RWPE1 (cell line): ENCODE measurements at regions of chr10 and their contacts with region 1.

Region 1: DNA sequence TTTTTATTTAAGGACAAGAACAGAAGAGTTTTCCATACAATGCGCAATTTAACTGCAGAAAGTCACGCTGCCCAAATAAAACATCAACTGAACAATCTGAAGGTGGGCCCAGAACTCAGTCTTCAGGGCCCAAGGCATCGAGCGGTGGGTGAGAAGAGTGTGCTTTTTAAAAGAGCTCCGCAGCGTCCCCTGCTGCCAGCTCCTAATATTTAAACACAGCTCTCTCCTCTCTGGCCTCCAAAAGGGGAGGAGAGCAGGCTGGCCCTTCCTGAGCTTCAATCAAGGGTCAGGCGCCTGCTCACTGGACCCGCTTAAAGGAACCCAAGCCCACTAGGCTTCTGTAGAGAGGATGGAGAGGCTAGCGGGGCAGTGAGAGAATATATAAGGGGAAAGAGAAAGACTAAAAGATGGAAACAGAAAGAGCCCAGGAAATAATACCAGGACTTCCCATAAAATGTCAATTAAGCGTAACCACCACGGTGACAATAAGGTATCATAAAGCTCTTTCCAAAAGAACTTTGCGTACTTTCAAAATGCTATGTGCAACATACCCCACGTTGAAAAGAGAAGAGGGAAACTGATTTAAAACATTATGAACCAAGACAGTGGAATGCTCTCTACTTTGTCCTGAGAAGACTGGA is 2.8 kb downstream of the FAM53B start:
- DNase-seq: peak; percentile 82
- H3K27ac ChIP-seq: peak overlapping the region; percentile 97
- CTCF ChIP-seq: peak; percentile 91

Region 2: GRCh38 chr10:124347956-124348355 is 393.4 kb before region 1 on chr10:
- CTCF ChIA-PET with region 1: no interaction called
- POLR2A ChIA-PET with region 1: no interaction called
- DNase-seq: no peak
- H3K27ac ChIP-seq: no peak overlapping the region
- CTCF ChIP-seq: no peak

Region 3: DNA sequence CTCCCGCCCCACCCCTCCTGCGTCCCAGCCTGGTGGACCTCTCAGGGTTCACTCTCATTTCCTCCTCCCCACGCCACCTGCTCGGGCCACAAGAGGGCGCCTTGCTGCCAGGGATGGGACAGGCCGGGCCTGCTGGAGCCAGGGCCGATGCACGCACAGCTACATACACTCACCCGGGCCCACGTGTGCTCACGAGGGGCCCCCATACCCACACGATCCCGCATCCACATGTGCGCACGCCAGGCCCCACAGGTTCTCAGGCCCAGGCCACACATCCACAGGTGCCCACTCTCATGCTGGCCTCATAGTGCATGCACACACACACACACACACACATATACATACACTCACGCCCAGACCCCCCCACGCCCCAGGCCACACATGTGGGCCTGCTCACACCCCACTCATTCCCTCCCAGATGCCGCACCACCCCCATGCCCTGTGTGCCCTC is 211.2 kb before region 1 on chr10:
- CTCF ChIA-PET with region 1: interaction called, 18 read pairs
- POLR2A ChIA-PET with region 1: no interaction called
- DNase-seq: peak; percentile 92
- H3K27ac ChIP-seq: peak overlapping the region; percentile 27
- CTCF ChIP-seq: peak; percentile 91

Region 4: DNA sequence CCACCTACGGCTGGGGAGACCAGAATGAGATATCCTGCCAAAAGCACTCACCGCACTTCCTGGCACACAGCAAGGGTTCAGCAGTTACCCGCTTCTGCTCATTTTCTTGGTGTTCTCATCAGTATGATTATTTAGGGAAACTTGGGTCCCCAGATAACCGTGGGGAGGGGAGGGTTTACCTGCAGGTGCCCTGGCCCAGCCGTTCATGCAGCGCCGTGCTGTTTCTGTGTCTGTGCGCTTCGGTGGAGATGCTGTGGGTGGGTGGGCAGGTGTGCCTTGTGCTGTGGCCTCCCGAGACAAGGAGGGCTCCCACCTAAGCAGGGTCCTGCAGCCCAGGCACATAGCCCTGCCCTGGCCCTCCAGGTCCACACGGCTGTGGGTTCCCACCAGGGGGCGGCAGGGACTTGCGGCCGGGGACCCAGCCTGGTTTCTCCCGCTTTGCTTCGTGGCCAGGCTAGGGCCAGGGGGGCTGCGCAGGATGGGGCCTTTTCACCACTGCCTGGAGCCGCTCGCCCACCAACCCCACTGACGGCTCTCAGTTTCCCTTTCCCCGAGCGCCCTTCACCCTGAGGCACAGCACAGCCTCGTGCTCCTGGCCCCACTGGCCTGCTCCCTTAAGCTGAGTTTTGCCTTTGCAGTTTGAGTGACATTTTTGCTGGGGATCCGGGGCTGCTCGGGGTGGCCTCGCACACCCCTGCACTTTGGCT is 201.3 kb before region 1 on chr10:
- CTCF ChIA-PET with region 1: interaction called, 10 read pairs
- POLR2A ChIA-PET with region 1: no interaction called
- DNase-seq: peak; percentile 67
- H3K27ac ChIP-seq: no peak overlapping the region
- CTCF ChIP-seq: peak; percentile 79

Region 5: GRCh38 chr10:125060826-125061556 is 319.6 kb after region 1 on chr10:
- CTCF ChIA-PET with region 1: no interaction called
- POLR2A ChIA-PET with region 1: no interaction called
- DNase-seq: peak; percentile 72
- H3K27ac ChIP-seq: peak overlapping the region; percentile 75
- CTCF ChIP-seq: peak; percentile 83